HEK293T (cell line): ENCODE measurements at regions of chr2 and their contacts with region 1.

Region 1: DNA sequence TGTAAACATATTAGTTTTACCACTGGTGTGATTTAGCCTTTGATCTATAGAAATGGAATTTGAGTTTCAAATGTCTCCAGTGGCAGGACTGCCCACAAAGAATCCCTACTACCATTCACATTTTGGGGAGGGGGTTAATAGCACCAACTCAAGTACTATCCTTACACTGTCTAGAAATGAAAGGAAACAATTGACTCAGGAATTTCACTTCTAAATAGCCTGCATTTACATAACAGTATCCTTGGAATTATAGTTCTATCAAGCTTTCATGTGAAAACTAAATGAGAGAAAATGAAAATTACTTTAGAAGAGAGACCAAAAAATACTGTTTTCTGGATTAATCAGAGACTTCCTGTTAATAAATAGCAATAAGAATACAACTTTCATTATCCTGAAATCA is 7.5 kb upstream of the CCDC93 start:
- DNase-seq: no peak

Region 2: DNA sequence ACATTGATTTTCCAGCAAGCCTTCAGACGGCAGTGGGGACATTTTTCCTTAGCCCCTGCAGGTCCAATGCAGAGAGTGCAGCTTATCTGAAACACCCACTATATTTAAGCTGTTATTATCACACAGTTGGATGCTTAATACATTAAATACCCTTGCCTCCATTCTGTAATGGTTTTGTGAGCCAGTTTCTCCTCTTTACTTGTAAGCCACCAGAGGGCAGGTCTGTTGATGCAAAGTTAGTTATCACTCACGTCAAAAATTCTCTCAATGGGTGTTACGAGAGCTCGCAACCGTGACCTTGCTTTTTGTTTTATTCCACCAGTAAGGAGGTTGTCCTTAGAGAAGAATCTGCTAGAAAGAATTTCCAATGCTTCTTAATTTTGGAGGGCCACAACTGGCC is 256.7 kb after region 1 on chr2:
- CTCF ChIA-PET with region 1: interaction called, 12 read pairs
- POLR2A ChIA-PET with region 1: no interaction called
- DNase-seq: no peak